ENCODE measurements at regions of chr18 and their contacts with region 1.

Region 1: DNA sequence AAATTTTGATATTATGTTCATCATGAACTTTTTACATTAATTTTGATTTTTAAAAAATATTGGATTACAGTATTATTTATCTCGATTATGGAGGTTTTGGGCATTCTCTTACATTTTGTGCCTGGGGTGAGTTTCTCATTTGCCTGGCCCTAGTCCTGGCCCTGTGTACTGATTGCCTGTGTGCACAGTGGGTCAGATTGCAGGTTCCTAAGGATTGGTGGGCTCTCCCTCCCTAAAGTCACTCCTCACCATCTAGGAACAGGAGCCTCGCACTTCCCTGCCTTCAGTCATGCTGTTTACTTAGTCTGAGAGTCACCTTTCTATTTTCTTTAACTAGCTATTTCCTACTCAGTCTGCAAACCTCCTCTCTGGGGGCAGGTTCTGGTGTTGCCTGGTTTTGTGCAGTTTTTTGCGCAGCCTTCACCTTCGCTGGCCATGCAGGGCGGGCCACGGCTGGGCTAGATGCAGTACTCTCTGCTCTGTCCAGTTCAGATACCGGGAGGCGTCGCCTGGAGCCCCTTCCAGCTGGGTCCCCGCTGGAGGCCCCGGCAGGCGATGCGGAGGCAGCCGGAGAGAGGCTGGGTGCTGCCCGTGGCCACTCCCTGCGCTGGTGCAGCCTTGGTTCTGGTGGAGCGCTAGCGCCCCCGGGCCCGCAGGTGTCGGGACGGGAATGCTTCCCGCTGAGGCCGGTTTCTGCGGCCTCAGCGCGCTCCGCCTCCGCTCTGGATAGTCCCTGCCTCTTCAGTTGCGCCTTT is 23.3 kb upstream of the MC5R start:
- DNase-seq: no peak

Region 2: DNA sequence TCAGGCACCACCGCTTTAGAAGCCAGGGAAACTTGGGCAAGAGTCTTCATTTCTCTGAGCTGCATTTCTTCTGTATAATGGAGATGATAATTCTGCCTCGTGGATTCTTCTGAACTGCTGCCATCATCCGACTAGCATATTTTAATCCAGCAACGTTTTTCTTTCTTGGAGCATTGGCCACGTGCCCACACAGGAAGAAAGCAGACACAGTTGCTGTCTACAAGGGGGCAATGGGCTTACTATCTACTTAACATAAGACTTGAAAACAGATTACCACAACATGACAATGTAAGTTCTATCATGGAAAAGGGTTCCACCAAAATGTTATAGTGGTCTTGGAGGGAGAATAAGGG is 250.8 kb before region 1 on chr18:
- intact Hi-C with region 1: loop called (anchors 5 kb)
- DNase-seq: no peak

Measured in cardiac septum (tissue), 1 donor.